GM12878 (cell line): ENCODE measurements at regions of chr5 and their contacts with region 1.

Region 1: DNA sequence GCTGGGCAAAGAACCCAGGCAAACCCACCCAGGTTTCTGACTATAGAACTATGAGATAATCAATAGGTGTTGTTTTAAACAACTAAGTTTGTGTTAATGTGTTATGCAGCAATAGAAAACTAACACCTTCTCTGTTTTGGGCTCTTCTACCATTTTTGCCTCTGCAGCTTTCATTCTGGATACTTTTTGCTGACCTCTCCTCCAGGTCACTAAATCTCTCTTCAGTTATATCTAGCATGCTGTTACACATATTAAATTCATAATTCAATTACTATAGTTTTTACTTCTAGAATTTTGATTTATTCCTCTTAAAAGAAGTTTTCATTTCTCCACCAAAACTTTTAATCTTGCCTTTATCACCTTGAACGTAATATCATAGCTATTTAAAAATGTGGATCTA is 17.2 kb downstream of the MAPK9 start:
- DNase-seq: no peak
- ATAC-seq: no peak
- H3K4me3 ChIP-seq: no peak overlapping the region
- H3K27ac ChIP-seq: no peak overlapping the region
- H3K4me1 ChIP-seq: no peaks in the 10 kb centered on the region
- H3K27me3 ChIP-seq: no peaks in the 10 kb centered on the region
- CTCF ChIP-seq: no peak
- EP300 ChIP-seq: no peak
- POLR2A ChIP-seq: no peak
- RAD21 ChIP-seq: no peak

Region 2: GRCh38 chr5:180238631-180239030 is 36.1 kb before region 1 on chr5:
- CTCF ChIA-PET with region 1: no interaction called
- POLR2A ChIA-PET with region 1: interaction called, 10 read pairs
- RAD21 ChIA-PET with region 1: no interaction called
- SMC1A ChIA-PET with region 1: no interaction called
- in situ Hi-C with region 1: no loop called
- intact Hi-C with region 1: no loop called
- DNase-seq: no peak
- ATAC-seq: no peak
- H3K4me3 ChIP-seq: no peak overlapping the region
- H3K27ac ChIP-seq: no peak overlapping the region
- H3K4me1 ChIP-seq: no peaks in the 10 kb centered on the region
- H3K27me3 ChIP-seq: no peaks in the 10 kb centered on the region
- CTCF ChIP-seq: no peak
- EP300 ChIP-seq: no peak
- POLR2A ChIP-seq: no peak
- RAD21 ChIP-seq: no peak